ENCODE measurements at regions of chr11 and their contacts with region 1.

Region 1: GRCh38 chr11:130894322-130895025 is 21.8 kb downstream of the SNX19 start:
- DNase-seq: peak; percentile 74
- ATAC-seq: peak in 1 of 2 donors; percentile 21

Region 2: GRCh38 chr11:130861902-130862860 is 32.3 kb before region 1 on chr11:
- intact Hi-C with region 1: loop called in 1 of 2 experiments (anchors 2 kb)
- DNase-seq: peak; percentile 93
- ATAC-seq: peak; percentile 60 to 67

Region 3: GRCh38 chr11:131065435-131066413 is 171.2 kb after region 1 on chr11:
- intact Hi-C with region 1: no loop called
- DNase-seq: no peak
- ATAC-seq: peak in 1 of 2 donors; percentile 34

Measured in left cardiac atrium (tissue), 4 donors.